ENCODE measurements at regions of chr20 and their contacts with region 1.

Region 1: DNA sequence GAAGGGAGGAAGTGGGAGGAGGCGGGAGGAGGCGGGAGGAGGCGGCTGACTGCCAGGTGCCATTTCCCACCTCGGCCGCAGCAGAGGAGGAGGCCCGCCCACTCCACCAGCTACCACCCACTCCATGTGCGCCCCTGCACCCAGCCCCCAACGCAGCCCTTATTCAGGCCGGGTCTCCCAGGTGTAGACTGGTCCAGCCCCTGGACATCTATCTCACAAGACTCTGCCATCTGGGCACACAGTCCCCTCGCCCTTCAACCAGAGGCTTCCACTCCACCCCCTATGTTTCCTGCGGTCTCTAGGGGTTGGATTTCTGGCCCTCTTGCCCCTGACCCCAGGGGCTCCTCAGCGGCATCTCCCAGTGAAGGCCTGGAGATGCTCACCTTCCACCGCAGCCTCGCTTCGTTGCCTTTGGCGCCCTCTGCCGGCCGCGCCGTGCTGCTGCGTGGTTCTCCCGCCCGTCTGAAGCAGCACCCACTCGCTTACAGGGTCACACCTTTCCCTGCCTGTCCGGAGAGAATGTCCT is 32.6 kb upstream of the FAM83D start:
- DNase-seq: peak in 1 of 2 experiments; percentile 74
- H3K4me3 ChIP-seq: no peak overlapping the region
- H3K27ac ChIP-seq: no peak overlapping the region
- H3K4me1 ChIP-seq: 0 out of 2 replicates have a peak, but pooled peaks cover 5% of the 10 kb centered on the region
- H3K27me3 ChIP-seq: peaks cover 35% of the 10 kb centered on the region
- CTCF ChIP-seq: peak; percentile 92

Region 2: GRCh38 chr20:38730989-38731737 is 162.5 kb before region 1 on chr20:
- CTCF ChIA-PET with region 1: no interaction called
- POLR2A ChIA-PET with region 1: no interaction called
- intact Hi-C with region 1: loop called (anchors 1 kb)
- DNase-seq: peak in 1 of 2 experiments; percentile 38
- H3K4me3 ChIP-seq: no peak overlapping the region
- H3K27ac ChIP-seq: no peak overlapping the region
- H3K4me1 ChIP-seq: no peaks in the 10 kb centered on the region
- H3K27me3 ChIP-seq: peaks cover 82% of the 10 kb centered on the region
- CTCF ChIP-seq: peak; percentile 96

Region 3: DNA sequence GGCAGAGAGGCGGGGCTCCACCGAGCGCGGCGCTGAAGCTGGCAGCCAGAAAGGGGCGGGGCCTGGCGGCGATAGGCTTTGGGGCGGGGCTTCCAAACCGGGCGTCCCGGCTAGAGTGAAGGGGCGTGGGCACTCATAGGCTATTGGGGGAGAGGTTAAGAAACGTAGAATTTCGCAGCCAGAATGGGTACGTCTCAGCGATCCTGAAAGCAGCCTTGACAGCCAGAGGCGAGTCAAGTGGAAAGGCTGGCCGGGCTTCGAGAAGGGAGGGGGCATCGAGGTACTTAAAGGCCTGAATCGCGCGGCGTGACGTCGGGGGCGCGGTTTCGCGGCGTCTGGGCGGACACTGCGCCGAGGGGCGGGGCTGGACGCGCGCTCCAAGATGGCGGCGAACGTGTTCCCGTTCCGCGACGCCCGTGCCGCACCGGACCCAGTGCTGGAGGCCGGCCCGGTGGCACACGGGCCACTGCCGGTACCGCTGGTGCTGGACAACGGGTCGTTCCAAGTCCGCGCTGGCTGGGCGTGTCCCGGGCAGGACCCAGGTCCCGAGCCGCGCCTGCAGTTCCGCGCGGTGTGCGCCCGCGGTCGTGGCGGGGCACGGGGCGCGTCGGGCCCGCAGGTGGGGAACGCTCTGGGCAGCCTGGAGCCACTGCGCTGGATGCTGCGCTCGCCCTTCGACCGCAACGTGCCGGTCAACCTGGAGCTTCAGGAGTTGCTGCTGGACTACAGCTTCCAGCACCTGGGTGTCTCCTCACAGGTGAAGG is 145.3 kb before region 1 on chr20 and contains the start of gene ACTR5:
- CTCF ChIA-PET with region 1: interaction called, 4 read pairs
- POLR2A ChIA-PET with region 1: no interaction called
- intact Hi-C with region 1: loop called (anchors 1 kb)
- DNase-seq: peak; percentile 73 to 97
- H3K4me3 ChIP-seq: peak within 1 kb of the TSS; percentile 79
- H3K27ac ChIP-seq: peak within 1 kb of the TSS; percentile 40
- H3K4me1 ChIP-seq: peaks cover 13% of the 10 kb centered on the region; the same call in 1 of the 2 replicates
- H3K27me3 ChIP-seq: peaks cover 26% of the 10 kb centered on the region
- CTCF ChIP-seq: no peak
- total RNA-seq, gene ACTR5: 7.8 and 10.1 TPM in 2 replicates